ENCODE measurements at regions of chr5 and their contacts with region 1.

Region 1: DNA sequence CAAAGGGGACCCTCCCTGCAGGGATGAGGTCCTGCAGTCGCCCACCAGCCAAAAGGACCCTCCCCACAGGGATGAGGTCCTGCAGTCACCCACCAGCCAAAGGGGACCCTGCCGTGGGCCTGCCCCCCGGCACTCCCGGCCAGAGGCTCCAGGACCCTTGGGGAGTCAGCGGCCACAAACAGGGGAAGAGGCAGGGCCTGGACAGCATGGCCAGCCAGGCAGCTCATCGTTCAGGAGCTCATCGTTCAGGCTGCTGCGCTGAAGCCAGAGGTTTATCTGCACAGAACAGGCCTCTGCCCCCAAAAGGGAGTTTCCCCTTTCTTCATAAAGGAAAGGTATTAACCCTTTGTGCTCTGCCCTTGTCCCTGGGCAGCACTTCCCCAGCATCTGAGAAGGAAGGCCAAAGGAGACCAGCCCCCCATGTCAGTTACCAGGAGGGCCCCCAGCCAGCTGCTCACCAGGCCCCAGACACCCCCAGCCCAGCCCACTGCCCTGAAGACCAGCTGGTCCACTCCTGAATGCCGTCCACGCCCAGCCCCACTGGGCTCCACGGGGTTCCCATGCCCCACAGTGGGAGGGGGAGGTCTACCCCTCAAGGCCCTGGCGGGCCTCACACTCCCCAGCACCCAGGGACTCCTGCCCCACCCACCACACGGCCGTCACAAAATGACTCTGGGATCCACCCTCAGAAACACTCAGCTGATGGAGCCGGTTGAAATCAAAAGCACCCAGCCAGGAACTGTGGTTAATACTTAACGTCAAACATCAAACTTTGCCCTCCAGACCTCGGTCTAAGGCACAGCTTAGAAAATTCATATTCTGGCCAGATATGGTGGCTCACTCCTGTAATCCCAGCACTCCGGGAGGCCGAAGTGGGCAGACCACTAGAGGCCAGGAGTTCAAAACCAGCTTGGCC is 6.3 kb downstream of the SLC12A7 start:
- DNase-seq: peak; percentile 72
- H3K4me3 Mint-ChIP-seq: peak overlapping the region; percentile 80
- H3K27ac Mint-ChIP-seq: peak overlapping the region; percentile 90
- H3K4me1 Mint-ChIP-seq: peaks cover 54% of the 10 kb centered on the region
- H3K27me3 Mint-ChIP-seq: no peaks in the 10 kb centered on the region

Region 2: GRCh38 chr5:801472-801871 is 304.1 kb before region 1 on chr5:
- intact Hi-C with region 1: no loop called
- DNase-seq: no peak
- H3K4me3 Mint-ChIP-seq: no peak overlapping the region
- H3K27ac Mint-ChIP-seq: no peak overlapping the region
- H3K4me1 Mint-ChIP-seq: no peaks in the 10 kb centered on the region
- H3K27me3 Mint-ChIP-seq: peaks cover 4% of the 10 kb centered on the region

Region 3: GRCh38 chr5:1090538-1090937 is 15.1 kb before region 1 on chr5:
- intact Hi-C with region 1: no loop called
- DNase-seq: no peak
- H3K4me3 Mint-ChIP-seq: no peak overlapping the region
- H3K27ac Mint-ChIP-seq: no peak overlapping the region
- H3K4me1 Mint-ChIP-seq: no peaks in the 10 kb centered on the region
- H3K27me3 Mint-ChIP-seq: peaks cover 2% of the 10 kb centered on the region

Region 4: GRCh38 chr5:1140171-1140817 is 34.7 kb after region 1 on chr5:
- intact Hi-C with region 1: loop called (anchors 1 kb)
- DNase-seq: peak; percentile 71
- H3K4me3 Mint-ChIP-seq: no peak overlapping the region
- H3K27ac Mint-ChIP-seq: peak overlapping the region; percentile 53
- H3K4me1 Mint-ChIP-seq: peaks cover 6% of the 10 kb centered on the region
- H3K27me3 Mint-ChIP-seq: peaks cover 7% of the 10 kb centered on the region

Region 5: DNA sequence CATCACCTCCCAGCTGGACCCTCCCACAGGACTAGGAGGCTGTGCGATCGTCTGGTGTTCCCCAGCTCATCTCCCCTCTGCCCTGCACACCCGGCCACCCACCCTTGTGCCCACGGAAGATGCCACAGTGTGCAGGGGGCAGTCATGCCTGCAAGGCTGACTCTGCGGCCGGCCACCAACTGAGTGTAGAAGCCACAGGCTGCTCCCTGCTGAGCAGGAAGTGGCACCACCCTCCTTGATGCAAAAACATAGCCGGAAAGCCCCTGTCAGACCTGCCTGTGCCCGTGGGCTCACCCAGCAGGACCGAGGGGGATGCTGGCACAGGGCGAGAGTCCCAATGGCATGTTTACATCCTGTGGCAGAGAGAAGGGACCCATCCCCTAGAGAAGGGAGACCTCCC is 46.5 kb after region 1 on chr5:
- intact Hi-C with region 1: loop called (anchors 1 kb)
- DNase-seq: no peak
- H3K4me3 Mint-ChIP-seq: no peak overlapping the region
- H3K27ac Mint-ChIP-seq: no peak overlapping the region
- H3K4me1 Mint-ChIP-seq: no peaks in the 10 kb centered on the region
- H3K27me3 Mint-ChIP-seq: peaks cover 22% of the 10 kb centered on the region

Region 6: DNA sequence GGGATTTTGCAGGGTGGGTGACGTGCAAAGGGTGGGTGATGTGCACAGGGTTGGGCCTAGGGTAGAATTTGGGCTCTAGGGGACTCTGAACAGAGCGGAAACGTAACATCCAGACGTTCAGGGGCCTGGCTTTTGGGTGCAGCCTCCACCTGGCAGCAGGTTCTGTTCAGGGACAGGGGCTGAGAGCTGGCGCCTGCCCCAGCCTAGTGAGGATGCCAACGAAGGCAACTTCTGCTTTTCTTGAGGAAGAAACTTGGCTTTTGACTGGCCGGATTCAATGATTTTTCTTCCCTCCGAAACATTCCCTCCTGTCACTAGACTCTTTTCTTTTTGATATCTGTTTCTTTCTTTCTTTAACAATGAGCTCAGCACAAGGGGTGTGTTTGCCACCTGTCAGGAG is 57.1 kb after region 1 on chr5:
- intact Hi-C with region 1: no loop called
- DNase-seq: no peak
- H3K4me3 Mint-ChIP-seq: no peak overlapping the region
- H3K27ac Mint-ChIP-seq: no peak overlapping the region
- H3K4me1 Mint-ChIP-seq: peaks cover under 1% of the 10 kb centered on the region
- H3K27me3 Mint-ChIP-seq: peaks cover 8% of the 10 kb centered on the region